Mammary epithelial cell (primary cell): ENCODE measurements at regions of chr15 and their contacts with region 1.

Region 1: DNA sequence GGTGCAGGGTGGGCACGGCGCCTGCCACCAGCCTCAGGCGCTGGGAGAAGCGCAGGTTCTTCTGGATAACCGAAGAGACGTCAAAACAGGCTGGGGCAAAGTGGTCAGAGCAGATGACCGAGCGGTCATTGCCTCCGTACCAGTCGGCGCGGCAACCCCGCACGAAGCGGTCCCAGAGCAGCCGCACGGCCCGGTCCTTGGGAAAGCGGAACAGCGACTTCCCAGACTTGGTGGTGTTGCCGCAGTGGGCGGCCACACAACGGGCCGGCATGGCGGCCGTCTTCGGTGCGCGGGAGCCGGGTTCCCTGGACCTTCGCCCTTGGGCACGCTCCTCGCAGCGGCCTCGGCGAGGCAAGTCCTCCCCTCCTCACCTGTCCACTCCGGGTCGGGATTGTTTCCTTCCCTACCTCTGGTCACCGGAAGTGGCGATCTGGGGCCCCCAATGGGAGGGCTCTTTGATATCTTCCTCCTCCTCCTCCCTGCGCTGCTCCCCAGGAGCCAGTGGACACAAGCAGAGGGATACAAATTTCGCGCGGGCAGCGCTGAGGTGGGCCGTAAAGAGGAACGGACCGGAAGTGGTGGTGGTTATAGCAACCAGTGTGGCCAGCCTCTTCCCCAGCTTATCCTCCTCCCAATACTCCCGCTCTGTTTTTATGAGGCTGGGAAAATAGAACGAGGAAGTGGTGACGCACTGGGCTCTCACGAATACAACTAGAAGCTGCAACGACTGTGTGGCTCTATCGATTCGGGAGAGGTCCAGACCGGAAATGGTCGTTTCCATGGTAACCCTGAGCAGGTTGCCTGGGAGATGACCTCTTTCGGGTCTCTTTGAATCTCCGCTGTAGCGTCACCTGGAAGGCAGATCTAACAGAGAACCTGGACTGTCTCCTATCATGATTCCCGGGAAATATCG is at the starts of genes LRRC49 and THAP10:
- DNase-seq: peak; percentile 97
- H3K4me3 ChIP-seq: peak within 1 kb of the TSS; percentile 80 to 88 (median 85)
- H3K27ac ChIP-seq: peak within 1 kb of the TSS; percentile 79
- H3K4me1 ChIP-seq: peaks cover 13% of the 10 kb centered on the region
- H3K27me3 ChIP-seq: no peaks in the 10 kb centered on the region
- CTCF ChIP-seq: peak in 1 of 2 donors; percentile 0
- total RNA-seq, gene LRRC49: 9.0 to 21.2 TPM
- total RNA-seq, gene THAP10: 3.0 to 4.9 TPM

Region 2: GRCh38 chr15:70826634-70827033 is 65.6 kb before region 1 on chr15:
- CTCF ChIA-PET with region 1: no interaction called
- dilution Hi-C with region 1: no loop called
- in situ Hi-C with region 1: no loop called
- intact Hi-C with region 1: loop called (anchors 1 kb)
- DNase-seq: peak; percentile 91
- H3K4me3 ChIP-seq: no peak overlapping the region
- H3K27ac ChIP-seq: peak overlapping the region; percentile 65
- H3K4me1 ChIP-seq: peaks cover 18% of the 10 kb centered on the region
- H3K27me3 ChIP-seq: no peaks in the 10 kb centered on the region
- CTCF ChIP-seq: no peak

Region 3: DNA sequence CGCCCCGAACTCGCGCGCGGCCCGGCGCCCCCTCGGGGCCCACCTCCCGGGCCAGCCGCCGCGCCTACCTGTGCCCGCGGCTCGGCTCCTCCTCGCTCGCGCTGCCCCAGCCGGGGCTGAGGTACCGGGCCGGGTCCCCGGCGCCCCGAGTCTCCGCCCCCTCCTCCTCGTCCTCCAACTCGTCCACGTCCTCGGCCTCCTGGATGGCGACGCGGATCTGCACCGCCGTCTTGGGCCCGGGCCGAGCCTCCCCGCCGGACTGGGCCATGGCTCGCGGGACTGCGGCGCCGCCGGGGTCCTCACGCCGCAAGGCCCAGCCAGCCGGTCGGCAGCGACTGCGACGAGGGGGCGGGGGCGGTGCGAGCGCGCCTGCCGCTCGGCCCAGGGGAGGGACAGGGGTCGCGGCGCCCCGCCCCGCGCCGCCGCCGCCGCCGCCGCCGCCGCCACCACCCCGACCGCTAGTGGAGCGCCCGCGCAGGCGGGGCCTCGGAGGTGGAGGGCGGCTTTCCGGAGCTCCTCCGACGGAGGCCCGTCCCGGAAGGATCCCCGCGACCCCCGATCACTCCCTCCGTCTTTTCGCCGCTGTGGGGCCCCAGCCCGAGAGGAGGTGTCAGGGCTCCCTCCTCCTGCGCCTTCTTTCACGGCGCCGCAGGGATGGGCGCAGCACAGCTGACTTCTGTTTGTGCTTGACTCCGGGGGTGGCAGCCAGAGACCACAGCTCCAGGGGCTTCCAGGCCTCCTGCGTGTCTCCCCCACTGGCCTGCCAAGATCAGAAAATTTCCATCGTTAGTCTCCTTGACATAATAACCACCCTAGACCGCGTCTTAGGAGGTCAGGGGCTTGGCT is 38.2 kb before region 1 on chr15 and contains the start of gene LARP6:
- CTCF ChIA-PET with region 1: no interaction called
- dilution Hi-C with region 1: no loop called
- in situ Hi-C with region 1: no loop called
- intact Hi-C with region 1: loop called (anchors 1 kb)
- DNase-seq: peak; percentile 22
- H3K4me3 ChIP-seq: peak within 1 kb of the TSS; percentile 66 to 87 (median 83)
- H3K27ac ChIP-seq: peak within 1 kb of the TSS; percentile 83
- H3K4me1 ChIP-seq: peaks cover 36% of the 10 kb centered on the region
- H3K27me3 ChIP-seq: no peaks in the 10 kb centered on the region
- CTCF ChIP-seq: no peak
- total RNA-seq, gene LARP6: 37.5 to 77.3 TPM

Region 4: DNA sequence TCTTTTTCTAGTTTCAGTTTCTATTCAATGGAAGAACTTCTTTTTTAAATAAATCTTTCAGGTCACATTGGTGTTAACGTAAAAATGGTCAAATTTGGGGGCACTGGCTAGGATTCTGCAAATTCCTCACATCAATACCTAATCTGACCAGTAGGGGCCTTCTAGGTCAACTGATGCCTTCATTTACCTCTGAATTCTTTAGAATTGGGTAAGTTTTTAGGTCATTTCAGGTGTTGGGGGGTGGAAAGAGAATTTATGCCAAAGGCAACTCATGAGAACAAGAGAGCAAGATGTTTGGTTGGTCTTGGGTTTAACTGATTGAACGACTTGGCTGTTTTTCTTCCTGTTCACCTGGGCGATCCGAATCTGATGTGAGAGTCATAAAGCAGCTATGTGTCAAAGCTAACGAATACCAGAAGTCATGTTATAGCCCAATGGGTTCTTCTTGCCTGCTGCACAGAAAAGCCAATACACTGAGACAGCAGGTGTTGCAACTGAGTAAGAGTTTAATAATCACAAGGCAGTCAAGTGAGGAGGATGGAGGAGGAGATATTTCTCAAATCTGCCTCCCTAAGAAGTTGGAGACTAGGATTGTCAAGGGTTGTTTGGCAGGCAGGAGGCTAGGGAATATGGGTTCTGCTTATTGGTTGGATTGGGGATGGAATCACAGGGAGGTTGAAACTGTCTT is 15.7 kb after region 1 on chr15:
- CTCF ChIA-PET with region 1: no interaction called
- dilution Hi-C with region 1: no loop called
- in situ Hi-C with region 1: no loop called
- intact Hi-C with region 1: no loop called
- DNase-seq: no peak
- H3K4me3 ChIP-seq: no peak overlapping the region
- H3K27ac ChIP-seq: no peak overlapping the region
- H3K4me1 ChIP-seq: no peaks in the 10 kb centered on the region
- H3K27me3 ChIP-seq: no peaks in the 10 kb centered on the region
- CTCF ChIP-seq: peak; percentile 24 to 27

Region 5: GRCh38 chr15:71103102-71103676 is 210.9 kb after region 1 on chr15:
- CTCF ChIA-PET with region 1: no interaction called
- dilution Hi-C with region 1: no loop called
- in situ Hi-C with region 1: no loop called
- intact Hi-C with region 1: loop called (anchors 5 kb)
- DNase-seq: peak; percentile 69
- H3K4me3 ChIP-seq: no peak overlapping the region
- H3K27ac ChIP-seq: peak overlapping the region; percentile 33
- H3K4me1 ChIP-seq: peaks cover 25% of the 10 kb centered on the region
- H3K27me3 ChIP-seq: no peaks in the 10 kb centered on the region
- CTCF ChIP-seq: peak; percentile 56 to 69